Vagina (tissue), 2 donors: ENCODE measurements at regions of chr5 and their contacts with region 1.

Region 1: DNA sequence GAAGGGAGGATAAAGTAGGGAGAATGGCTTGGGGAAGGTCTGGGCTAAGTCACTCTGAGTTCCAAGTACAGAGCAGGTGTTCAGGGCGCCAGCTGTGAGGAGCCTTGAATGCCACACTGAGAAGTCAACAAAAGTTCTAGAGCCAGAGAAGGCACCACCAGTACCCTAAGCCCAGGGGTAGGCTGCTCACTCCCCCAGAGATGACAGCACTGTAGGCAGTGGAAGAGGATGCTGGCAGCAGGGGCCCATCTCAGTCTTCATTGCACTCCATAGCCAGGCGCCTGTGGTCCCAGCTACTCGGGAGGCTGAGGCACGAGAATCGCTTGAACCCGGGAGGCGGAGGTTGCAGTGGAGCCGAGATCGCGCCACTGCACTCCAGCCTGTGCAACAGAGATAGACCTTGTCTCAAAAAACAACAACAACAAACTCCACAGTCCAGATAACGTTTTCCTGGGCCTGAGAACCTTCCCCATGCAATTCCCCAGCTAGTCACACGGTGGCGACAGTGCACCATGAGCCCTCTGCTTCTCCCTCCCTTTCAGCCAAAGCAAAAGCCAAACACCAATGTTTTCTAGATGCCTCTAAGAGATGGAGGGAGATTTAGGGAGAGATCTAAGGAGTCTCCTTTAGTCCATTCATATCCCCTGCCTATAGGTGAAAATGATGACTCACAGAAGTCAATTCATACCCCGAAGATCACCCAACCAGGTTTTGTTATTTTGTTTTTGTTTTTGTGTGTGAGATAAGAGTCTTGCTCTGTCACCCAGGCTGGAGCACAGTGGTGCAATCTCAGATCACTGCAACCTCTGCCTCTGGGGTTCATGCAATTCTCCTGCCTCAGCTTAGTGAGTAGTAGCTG is 19.8 kb upstream of the NSD1 start:
- DNase-seq: no peak
- H3K4me3 ChIP-seq: no peak overlapping the region
- H3K27ac ChIP-seq: no peak overlapping the region
- H3K4me1 ChIP-seq: peaks cover 12% of the 10 kb centered on the region
- H3K27me3 ChIP-seq: no peaks in the 10 kb centered on the region
- CTCF ChIP-seq: peak; percentile 83 to 96 (median 86)
- POLR2A ChIP-seq: no peak

Region 2: DNA sequence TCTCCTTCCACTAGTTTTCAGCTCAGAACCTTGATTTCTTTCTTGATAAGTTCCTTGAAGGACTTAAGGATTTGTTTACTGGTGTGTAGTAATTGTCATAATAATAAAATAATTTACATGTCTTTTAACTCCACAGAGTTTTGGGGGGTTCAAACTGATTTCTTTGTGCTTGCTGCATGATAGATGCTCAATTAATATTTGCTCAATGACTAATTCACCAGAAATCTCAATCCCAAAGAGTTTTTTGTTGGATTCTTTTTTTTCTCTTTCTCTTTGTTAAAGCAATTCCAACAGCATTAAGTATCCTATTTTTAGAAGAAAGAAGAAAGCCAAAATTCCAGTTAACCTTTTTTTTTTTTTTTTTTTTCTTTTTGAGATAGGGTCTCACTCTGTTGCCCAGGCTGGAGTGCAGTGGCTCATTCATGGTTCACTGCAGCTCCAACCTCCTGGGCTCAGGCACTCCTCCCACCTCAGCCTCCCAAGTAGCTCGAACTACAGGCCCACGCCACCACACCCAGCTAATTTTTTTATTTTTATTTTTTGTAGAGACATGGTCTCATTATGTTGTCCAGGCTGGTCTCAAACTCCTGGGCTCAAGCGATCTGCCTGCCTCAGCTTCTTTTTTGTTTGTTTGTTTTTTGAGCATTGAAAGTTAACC is 654.8 kb before region 1 on chr5:
- intact Hi-C with region 1: no loop called
- DNase-seq: no peak
- H3K4me3 ChIP-seq: no peak overlapping the region
- H3K27ac ChIP-seq: no peak overlapping the region
- H3K4me1 ChIP-seq: peaks cover 9% of the 10 kb centered on the region
- H3K27me3 ChIP-seq: no peaks in the 10 kb centered on the region
- CTCF ChIP-seq: no peak
- POLR2A ChIP-seq: no peak

Region 3: DNA sequence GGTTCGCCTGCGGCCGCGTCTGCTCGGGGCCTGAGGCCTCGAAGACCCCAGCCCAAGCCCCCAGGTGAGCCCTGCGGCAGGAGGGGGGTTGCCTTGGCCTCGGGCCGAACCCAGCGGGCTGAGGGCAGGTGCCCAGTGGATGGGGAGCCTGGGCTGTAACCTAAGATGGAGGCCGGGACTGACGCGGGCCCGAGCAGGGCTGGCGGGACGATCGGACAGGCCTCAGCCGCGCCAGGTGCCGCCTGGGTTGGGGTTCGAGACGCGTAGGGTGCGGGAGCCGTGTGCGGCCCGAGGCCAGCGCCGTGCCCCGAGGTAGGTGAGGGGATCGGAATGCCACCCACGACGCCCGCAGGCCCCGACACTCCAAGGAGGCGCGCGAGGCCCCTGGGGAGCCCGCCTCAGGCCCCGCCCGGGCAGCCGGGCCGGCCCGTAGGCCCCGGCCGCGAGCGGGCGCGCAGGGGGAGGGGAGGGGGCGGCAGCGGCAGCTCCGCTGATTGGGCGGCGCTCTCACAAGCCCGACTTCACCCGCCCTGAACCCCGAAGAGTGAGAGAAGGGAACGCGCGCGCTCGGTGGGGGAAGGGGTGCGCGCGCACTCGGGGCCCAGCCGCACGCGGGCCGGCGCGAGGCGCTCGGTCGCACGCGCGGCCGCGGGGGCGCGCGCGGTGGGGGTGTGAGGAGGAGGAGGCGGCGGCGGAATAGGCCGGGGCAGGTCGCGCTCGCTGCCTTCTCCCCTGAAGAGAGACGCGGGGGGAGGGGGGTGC is 19.5 kb after region 1 on chr5 and contains the start of gene NSD1:
- intact Hi-C with region 1: no loop called
- DNase-seq: no peak
- H3K4me3 ChIP-seq: peak within 1 kb of the TSS; percentile 61 to 89
- H3K27ac ChIP-seq: peak within 1 kb of the TSS; percentile 96
- H3K4me1 ChIP-seq: peaks cover 34% of the 10 kb centered on the region
- H3K27me3 ChIP-seq: no peaks in the 10 kb centered on the region
- CTCF ChIP-seq: no peak
- POLR2A ChIP-seq: peak in 1 of 2 donors; percentile 62
- total RNA-seq, gene NSD1: 45.4 TPM

Region 4: GRCh38 chr5:177249761-177250526 is 136.1 kb after region 1 on chr5:
- intact Hi-C with region 1: no loop called
- DNase-seq: no peak
- H3K4me3 ChIP-seq: no peak overlapping the region
- H3K27ac ChIP-seq: no peak overlapping the region
- H3K4me1 ChIP-seq: no peaks in the 10 kb centered on the region
- H3K27me3 ChIP-seq: no peaks in the 10 kb centered on the region
- CTCF ChIP-seq: no peak
- POLR2A ChIP-seq: no peak

Region 5: GRCh38 chr5:177303121-177303924 is 189.5 kb after region 1 on chr5 and contains the starts of genes PRELID1 and RAB24:
- intact Hi-C with region 1: loop called (anchors 10 kb)
- DNase-seq: no peak
- H3K4me3 ChIP-seq: peak within 1 kb of the TSS; percentile 77 to 90
- H3K27ac ChIP-seq: peak within 1 kb of the TSS; percentile 84
- H3K4me1 ChIP-seq: peaks cover 69% of the 10 kb centered on the region
- H3K27me3 ChIP-seq: no peaks in the 10 kb centered on the region
- CTCF ChIP-seq: peak in 1 of 3 experiments; percentile 47
- POLR2A ChIP-seq: peak in 1 of 2 donors; percentile 23
- total RNA-seq, gene PRELID1: 93.3 TPM
- total RNA-seq, gene RAB24: 48.6 TPM